ENCODE measurements at regions of chrX and their contacts with region 1.

Region 1: GRCh38 chrX:47193475-47194193 is at the start of gene UBA1:
- DNase-seq: peak; percentile 78 to 81
- H3K4me3 ChIP-seq: peak within 1 kb of the TSS; percentile 61
- H3K27ac ChIP-seq: peak within 1 kb of the TSS; percentile 75
- H3K4me1 ChIP-seq: no peaks in the 10 kb centered on the region
- H3K27me3 ChIP-seq: no peaks in the 10 kb centered on the region
- CTCF ChIP-seq: peak; percentile 66
- total RNA-seq, gene UBA1: 121 and 126 TPM in 2 replicates

Region 2: GRCh38 chrX:47179221-47179920 is 14.3 kb before region 1 on chrX:
- CTCF ChIA-PET with region 1: no interaction called
- POLR2A ChIA-PET with region 1: no interaction called
- intact Hi-C with region 1: no loop called
- DNase-seq: no peak
- H3K4me3 ChIP-seq: no peak overlapping the region
- H3K27ac ChIP-seq: no peak overlapping the region
- H3K4me1 ChIP-seq: no peaks in the 10 kb centered on the region
- H3K27me3 ChIP-seq: no peaks in the 10 kb centered on the region
- CTCF ChIP-seq: no peak

Region 3: GRCh38 chrX:47283015-47283771 is 89.6 kb after region 1 on chrX:
- CTCF ChIA-PET with region 1: no interaction called
- POLR2A ChIA-PET with region 1: no interaction called
- intact Hi-C with region 1: no loop called
- DNase-seq: no peak
- H3K4me3 ChIP-seq: no peak overlapping the region
- H3K27ac ChIP-seq: no peak overlapping the region
- H3K4me1 ChIP-seq: no peaks in the 10 kb centered on the region
- H3K27me3 ChIP-seq: no peaks in the 10 kb centered on the region
- CTCF ChIP-seq: no peak

Region 4: DNA sequence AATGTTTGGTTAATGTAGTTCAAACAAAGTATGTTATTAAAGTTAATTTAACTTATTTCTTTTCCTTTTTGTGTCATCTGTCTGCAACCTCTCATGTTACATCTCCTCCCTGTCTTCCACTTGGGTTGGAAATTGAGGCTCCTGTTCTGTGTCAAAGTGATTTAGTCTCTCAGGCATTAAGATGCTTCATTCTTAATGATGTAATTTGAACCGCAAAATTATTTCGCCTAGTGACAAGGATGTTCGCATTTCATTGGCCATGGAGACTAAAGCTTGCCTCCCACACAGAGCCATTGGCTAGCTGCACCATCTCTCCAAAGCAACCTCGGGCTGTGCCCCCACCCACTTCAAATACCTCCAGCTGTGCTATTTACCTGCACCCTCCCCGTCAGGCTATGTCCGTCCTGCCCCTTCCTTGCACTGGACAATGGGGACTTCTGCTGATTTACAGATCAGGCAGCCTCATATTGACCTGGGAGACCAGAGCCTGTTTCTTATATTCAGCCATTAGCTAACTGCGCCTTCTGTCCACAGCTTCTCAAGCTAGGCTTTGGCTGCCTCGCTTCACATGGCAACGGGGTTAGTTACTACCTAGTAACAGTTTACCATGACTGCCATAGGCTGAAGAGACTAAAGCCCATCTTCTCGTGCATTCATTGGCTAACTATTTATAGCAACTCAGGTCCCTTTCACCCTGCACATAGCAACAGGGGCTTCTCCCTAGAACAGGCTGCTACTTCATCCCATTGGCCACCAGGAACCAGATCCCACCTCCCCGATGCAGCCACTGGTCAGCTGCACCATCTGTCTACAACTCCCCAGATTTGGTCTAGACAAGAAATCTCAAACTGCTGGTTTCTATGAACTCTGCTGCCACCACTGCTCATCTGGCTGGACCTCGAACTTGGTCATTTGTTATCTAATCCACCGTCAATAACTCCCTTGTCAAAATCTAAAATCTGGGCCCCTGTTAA is 168.2 kb after region 1 on chrX:
- CTCF ChIA-PET with region 1: no interaction called
- POLR2A ChIA-PET with region 1: no interaction called
- intact Hi-C with region 1: loop called (anchors 5 kb)
- DNase-seq: peak in 1 of 2 experiments; percentile 59
- H3K4me3 ChIP-seq: no peak overlapping the region
- H3K27ac ChIP-seq: no peak overlapping the region
- H3K4me1 ChIP-seq: no peaks in the 10 kb centered on the region
- H3K27me3 ChIP-seq: no peaks in the 10 kb centered on the region
- CTCF ChIP-seq: no peak

Region 5: GRCh38 chrX:47384502-47384901 is 190.9 kb after region 1 on chrX:
- CTCF ChIA-PET with region 1: no interaction called
- POLR2A ChIA-PET with region 1: no interaction called
- intact Hi-C with region 1: loop called (anchors 1 kb)
- DNase-seq: peak; percentile 35 to 39
- H3K4me3 ChIP-seq: no peak overlapping the region
- H3K27ac ChIP-seq: no peak overlapping the region
- H3K4me1 ChIP-seq: no peaks in the 10 kb centered on the region
- H3K27me3 ChIP-seq: no peaks in the 10 kb centered on the region
- CTCF ChIP-seq: peak; percentile 68

Region 6: GRCh38 chrX:47523297-47523696 is 329.7 kb after region 1 on chrX:
- CTCF ChIA-PET with region 1: interaction called, 3 read pairs
- POLR2A ChIA-PET with region 1: no interaction called
- intact Hi-C with region 1: loop called (anchors 5 kb)
- DNase-seq: peak in 1 of 2 experiments; percentile 69
- H3K4me3 ChIP-seq: peak overlapping the region; percentile 47; the same call in 1 of the 2 replicates
- H3K27ac ChIP-seq: no peak overlapping the region
- H3K4me1 ChIP-seq: no peaks in the 10 kb centered on the region
- H3K27me3 ChIP-seq: no peaks in the 10 kb centered on the region
- CTCF ChIP-seq: peak; percentile 62

Region 7: GRCh38 chrX:47650164-47651042 is 456.8 kb after region 1 on chrX and contains the start of gene ELK1:
- CTCF ChIA-PET with region 1: no interaction called
- POLR2A ChIA-PET with region 1: no interaction called
- intact Hi-C with region 1: loop called (anchors 10 kb)
- DNase-seq: peak; percentile 85 to 89
- H3K4me3 ChIP-seq: peak within 1 kb of the TSS; percentile 51; the same call in 1 of the 2 replicates
- H3K27ac ChIP-seq: no peak within 1 kb of the TSS
- H3K4me1 ChIP-seq: no peaks in the 10 kb centered on the region
- H3K27me3 ChIP-seq: no peaks in the 10 kb centered on the region
- CTCF ChIP-seq: no peak
- total RNA-seq, gene ELK1: 16.4 and 22.0 TPM in 2 replicates

Measured in PC-9 (cell line).